ENCODE measurements at regions of chr6 and their contacts with region 1.

Region 1: DNA sequence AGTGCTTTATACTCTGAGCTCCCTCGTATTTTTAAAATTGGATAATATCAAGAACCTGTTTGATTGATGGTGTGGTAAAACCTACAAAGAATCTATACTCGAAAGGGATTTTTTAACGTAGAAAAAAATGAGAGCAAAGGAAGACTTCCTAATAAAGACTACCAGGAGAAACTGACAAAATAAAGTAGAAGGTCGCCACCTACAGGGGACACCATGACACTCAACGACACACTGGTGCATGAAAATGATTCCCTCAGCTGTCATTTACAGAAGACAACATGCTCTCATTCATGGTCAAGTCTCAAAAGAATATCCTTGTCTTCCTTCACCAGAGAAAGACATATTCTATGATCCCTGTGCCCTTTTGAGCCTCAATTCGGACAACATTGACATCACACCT is 10.1 kb upstream of the NHSL1 start:
- DNase-seq: peak; percentile 78
- H3K4me3 Mint-ChIP-seq: no peak overlapping the region
- H3K27ac Mint-ChIP-seq: no peak overlapping the region
- H3K4me1 Mint-ChIP-seq: no peaks in the 10 kb centered on the region
- H3K27me3 Mint-ChIP-seq: no peaks in the 10 kb centered on the region

Region 2: DNA sequence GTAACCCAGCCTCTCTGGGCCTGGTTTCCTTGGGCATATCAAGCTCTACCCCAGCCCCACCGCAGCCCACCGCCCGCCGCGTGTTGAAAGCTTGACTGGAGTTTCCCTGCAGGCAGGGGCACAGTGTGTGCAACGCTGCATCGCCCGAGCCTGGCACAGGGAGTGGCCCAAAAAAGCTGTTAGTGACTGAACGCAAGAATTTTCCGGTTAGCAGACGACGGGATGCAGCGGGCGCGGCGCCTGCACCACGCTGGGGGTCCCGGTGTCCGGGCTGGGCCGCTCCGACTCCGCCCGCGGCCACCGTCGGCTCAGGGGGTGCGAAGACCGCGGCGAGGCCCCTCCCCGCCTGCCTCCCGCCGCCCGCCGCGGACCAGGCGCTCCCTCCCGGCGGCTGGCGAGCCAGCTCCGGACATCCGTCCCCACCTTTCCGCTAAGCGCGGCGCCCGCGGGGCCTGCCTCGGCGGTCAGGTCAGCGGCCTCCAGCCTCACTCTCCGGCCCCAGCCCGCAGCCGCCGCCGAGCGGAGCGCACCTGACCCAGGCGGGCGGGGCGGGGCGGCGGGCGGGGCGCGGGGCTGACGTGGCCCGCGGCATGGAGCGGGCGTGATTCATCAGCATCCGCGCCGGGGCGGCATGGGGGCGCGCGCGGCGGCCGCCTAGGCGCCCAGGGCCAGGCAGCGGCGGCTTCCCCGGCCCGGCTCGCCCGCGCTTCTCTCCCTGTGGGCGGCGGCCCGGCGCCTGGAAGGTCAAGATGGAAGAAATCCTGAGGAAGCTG is 347.8 kb before region 1 on chr6 and contains the start of gene ARFGEF3:
- CTCF ChIA-PET with region 1: no interaction called
- intact Hi-C with region 1: loop called (anchors 2 kb)
- DNase-seq: peak; percentile 70
- H3K4me3 Mint-ChIP-seq: peak within 1 kb of the TSS; percentile 68
- H3K27ac Mint-ChIP-seq: no peak within 1 kb of the TSS
- H3K4me1 Mint-ChIP-seq: peaks cover 11% of the 10 kb centered on the region
- H3K27me3 Mint-ChIP-seq: peaks cover 59% of the 10 kb centered on the region
- total RNA-seq, gene ARFGEF3: 0.72 TPM

Region 3: DNA sequence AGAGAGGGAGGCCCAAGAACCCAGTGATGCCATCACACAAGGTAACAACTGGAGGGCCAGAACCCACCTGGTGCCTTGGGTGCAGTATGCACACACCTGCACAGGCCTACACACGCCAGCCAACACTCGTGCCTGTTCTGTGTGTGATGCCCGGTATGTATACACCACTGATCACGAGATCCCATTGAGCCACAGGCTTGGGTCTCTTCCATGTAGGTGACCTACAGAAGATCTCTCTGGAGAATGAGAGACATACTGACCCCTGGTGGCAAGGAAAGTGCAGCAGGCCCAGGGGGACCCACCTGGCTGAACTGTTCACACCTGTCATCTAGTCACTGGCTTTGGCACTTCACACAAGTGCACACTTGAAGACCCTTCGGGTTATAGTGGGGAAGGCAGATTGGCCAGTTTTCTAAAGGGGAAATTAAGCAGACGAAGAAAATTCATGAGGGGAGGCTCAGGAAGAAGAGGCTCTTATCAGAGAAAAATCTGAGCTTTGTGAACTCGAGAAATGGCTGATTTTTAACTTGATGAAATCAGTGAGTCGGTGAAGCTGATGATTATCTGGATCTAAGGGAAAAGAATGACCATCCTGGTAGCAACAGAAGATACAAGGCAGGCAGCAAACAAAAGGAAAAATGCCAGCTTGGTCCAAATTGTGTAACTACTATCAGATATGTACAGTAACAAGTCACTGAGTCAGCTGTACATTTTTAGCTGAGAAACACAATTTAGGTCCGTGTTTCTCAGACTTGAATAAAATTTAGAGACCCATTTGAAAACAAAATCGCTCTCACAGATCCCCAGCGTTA is 222.0 kb before region 1 on chr6:
- CTCF ChIA-PET with region 1: interaction called, 4 read pairs
- intact Hi-C with region 1: loop called (anchors 5 kb)
- DNase-seq: peak; percentile 70
- H3K4me3 Mint-ChIP-seq: no peak overlapping the region
- H3K27ac Mint-ChIP-seq: no peak overlapping the region
- H3K4me1 Mint-ChIP-seq: peaks cover 6% of the 10 kb centered on the region
- H3K27me3 Mint-ChIP-seq: no peaks in the 10 kb centered on the region

Region 4: DNA sequence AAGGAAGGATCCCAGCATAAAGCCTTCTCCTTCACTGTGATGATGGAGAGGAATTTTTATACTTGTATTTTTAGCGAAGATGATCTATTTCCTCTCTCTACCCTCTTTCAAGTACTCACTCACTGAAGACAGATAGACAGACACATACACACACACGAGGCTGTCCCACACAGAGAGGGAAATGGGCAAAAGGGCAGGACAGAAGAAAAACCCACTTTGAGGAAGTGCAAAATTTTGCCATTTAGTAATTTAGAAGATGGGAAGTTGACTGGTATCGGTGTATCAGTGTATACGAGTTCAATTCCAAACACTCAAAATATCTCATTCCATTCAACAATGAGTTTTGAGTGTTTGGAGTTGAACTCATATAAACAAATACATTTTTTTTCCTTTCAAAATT is 74.4 kb before region 1 on chr6:
- CTCF ChIA-PET with region 1: interaction called, 33 read pairs
- intact Hi-C with region 1: no loop called
- DNase-seq: no peak
- H3K4me3 Mint-ChIP-seq: no peak overlapping the region
- H3K27ac Mint-ChIP-seq: no peak overlapping the region
- H3K4me1 Mint-ChIP-seq: no peaks in the 10 kb centered on the region
- H3K27me3 Mint-ChIP-seq: peaks cover 2% of the 10 kb centered on the region

Region 5: GRCh38 chr6:138577151-138577915 is 68.0 kb after region 1 on chr6:
- CTCF ChIA-PET with region 1: no interaction called
- intact Hi-C with region 1: no loop called
- DNase-seq: no peak
- H3K4me3 Mint-ChIP-seq: no peak overlapping the region
- H3K27ac Mint-ChIP-seq: no peak overlapping the region
- H3K4me1 Mint-ChIP-seq: peaks cover 1% of the 10 kb centered on the region
- H3K27me3 Mint-ChIP-seq: peaks cover 3% of the 10 kb centered on the region